Activated CD4-positive, alpha-beta T cell treated with anti-CD3 and anti-CD28 coated beads for 36 hours (primary cell): ENCODE measurements at regions of chr21 and their contacts with region 1.

Region 1: DNA sequence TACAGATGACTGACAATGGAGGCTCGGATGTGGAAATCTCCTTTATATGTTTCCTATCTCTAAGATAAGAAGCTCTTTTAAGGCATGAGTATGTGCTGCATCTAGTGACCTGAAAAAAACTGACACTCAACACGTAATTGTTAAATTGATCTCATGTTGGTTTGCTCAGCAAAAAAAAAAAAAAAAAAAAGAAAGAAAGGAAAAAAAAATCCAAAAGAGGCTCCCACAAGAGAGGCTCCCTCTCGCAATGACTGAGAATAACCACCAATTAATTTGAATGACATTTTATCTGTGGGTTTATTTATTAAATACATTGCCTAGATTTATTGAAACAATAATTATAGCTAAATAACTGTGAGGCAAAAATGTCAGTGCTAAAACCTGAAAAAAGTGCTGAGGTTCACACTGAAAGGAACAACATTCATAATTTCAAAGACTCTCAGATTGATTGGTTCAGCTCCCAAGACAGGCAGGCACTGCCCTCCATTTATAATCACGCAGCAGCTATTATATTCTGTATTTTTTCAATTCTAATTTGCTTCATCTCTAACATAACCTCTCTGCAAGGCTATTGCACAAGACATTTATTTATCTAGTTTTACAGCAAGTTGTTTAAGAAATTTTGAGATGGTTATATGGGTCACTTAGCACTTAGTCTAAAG is 184.5 kb upstream of the TMPRSS15 start:
- DNase-seq: no peak
- ATAC-seq: no peak
- H3K4me3 Mint-ChIP-seq: no peak overlapping the region
- H3K27ac Mint-ChIP-seq: no peak overlapping the region
- H3K4me1 Mint-ChIP-seq: no peaks in the 10 kb centered on the region
- H3K27me3 Mint-ChIP-seq: no peaks in the 10 kb centered on the region

Region 2: DNA sequence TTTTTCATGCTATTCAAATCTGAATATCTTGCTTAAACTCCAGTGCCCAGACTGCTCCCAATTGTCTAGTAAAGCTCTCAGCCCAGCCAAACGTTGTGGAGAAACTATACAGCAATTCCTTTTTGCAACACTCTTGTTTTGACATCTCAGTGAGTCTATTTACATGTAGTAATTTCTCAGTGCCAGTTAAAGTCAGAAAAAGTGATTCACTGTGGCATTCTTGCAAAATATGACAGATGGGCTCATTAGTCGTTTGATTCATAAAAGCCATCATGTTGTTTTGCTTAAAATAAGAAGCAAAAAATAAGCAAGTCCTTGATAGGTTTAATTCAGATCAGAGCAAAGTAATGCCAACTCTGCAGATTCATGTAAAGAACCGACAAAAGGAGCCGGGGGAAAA is 163.9 kb before region 1 on chr21:
- CTCF ChIA-PET with region 1: no interaction called
- POLR2A ChIA-PET with region 1: no interaction called
- intact Hi-C with region 1: no loop called
- DNase-seq: no peak
- ATAC-seq: no peak
- H3K4me3 Mint-ChIP-seq: no peak overlapping the region
- H3K27ac Mint-ChIP-seq: no peak overlapping the region
- H3K4me1 Mint-ChIP-seq: no peaks in the 10 kb centered on the region
- H3K27me3 Mint-ChIP-seq: no peaks in the 10 kb centered on the region

Region 3: DNA sequence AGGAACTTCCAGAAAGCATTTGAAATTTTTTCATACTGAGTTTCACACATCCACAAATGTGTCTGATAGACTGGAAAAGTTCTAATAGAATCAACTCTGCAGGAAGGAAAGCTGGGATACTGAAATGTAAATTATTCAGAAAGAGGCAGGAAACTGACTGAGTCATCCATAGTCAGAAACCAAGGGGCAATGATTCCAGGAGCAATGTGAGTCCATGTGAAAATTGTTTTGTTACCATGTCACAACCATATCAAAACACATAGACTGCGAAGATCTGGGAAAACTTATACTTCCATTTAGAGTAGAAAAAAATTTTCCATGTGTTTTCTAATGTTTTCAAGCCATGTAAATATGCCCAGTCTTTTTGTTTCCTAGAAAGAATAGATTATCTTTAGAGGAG is 42.2 kb before region 1 on chr21:
- CTCF ChIA-PET with region 1: no interaction called
- POLR2A ChIA-PET with region 1: no interaction called
- intact Hi-C with region 1: no loop called
- DNase-seq: no peak
- ATAC-seq: no peak
- H3K4me3 Mint-ChIP-seq: no peak overlapping the region
- H3K27ac Mint-ChIP-seq: no peak overlapping the region
- H3K4me1 Mint-ChIP-seq: no peaks in the 10 kb centered on the region
- H3K27me3 Mint-ChIP-seq: no peaks in the 10 kb centered on the region

Region 4: DNA sequence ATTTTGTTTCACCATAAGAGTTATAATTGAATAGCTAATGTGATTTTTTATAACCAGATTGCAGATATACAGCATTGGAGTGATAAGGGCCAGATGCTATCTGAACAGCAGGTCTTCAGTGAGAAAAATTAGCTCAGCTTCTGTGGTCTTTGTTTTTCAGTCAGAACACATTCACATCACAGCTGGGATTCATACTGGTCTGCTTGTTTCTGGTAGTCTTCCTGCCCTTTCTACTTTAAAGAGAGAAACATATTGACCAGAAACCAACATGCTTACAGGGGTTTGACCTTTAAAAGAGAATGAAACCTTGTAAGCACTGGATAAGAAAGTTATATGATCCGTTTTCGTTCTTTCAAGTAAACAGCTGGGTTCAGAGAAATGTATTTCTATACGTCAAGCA is 29.2 kb after region 1 on chr21:
- CTCF ChIA-PET with region 1: no interaction called
- POLR2A ChIA-PET with region 1: interaction called, 10 read pairs
- intact Hi-C with region 1: no loop called
- DNase-seq: no peak
- ATAC-seq: no peak
- H3K4me3 Mint-ChIP-seq: no peak overlapping the region
- H3K27ac Mint-ChIP-seq: no peak overlapping the region
- H3K4me1 Mint-ChIP-seq: no peaks in the 10 kb centered on the region
- H3K27me3 Mint-ChIP-seq: no peaks in the 10 kb centered on the region